Activated CD4-positive, alpha-beta T cell treated with anti-CD3 and anti-CD28 coated beads for 36 hours (primary cell): ENCODE measurements at regions of chr14 and their contacts with region 1.

Region 1: DNA sequence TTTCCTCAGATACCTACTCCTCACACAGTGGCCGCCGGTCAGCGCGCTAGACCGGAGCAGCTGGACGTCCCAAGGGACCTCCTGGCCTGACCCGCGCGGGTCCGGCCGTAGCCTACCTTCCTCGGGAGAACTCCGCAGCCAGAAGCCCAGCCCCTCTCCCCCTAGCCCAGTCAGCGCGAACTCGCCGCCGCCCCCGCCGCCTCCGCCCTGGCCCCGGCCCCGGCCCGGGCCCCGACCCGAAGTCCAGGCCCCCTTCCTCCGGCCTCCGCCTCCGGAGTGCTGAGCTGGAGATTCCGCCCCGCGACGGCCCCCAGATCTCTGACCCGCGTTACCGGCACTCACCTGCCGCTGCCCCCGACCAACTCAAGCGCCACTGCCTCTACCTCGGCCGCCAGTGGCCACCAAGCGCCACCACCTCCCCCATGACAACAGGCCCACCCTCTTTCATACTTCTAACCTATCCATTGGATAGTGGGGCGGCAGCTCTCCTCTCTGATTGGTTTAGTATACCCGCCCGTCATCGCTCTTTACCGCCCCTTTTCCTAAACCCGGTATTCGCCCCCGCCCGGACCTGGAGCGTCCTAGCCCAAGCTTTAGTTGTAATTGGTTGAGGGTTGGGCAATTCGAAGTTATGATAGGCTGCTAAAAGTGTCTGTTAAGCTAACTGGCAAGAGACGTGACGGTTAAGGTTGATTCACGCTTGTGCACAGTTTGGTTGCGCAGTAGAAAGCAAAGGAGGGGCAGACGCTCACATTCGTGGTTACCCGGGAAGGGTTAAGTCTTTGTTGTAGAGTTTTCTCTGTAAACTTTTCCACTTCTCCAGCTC is at the start of gene NUMB:
- DNase-seq: peak; percentile 98
- ATAC-seq: peak; percentile 97
- H3K4me3 Mint-ChIP-seq: peak within 1 kb of the TSS; percentile 95
- H3K27ac Mint-ChIP-seq: peak within 1 kb of the TSS; percentile 96
- H3K4me1 Mint-ChIP-seq: peaks cover 45% of the 10 kb centered on the region
- H3K27me3 Mint-ChIP-seq: no peaks in the 10 kb centered on the region
- total RNA-seq, gene NUMB: 35.7 to 54.9 TPM

Region 2: GRCh38 chr14:72926292-72927028 is 531.9 kb before region 1 on chr14 and contains the start of gene DCAF4:
- CTCF ChIA-PET with region 1: no interaction called
- POLR2A ChIA-PET with region 1: no interaction called
- intact Hi-C with region 1: loop called in 1 of 2 experiments (anchors 2 kb)
- DNase-seq: peak; percentile 96
- ATAC-seq: peak; percentile 99
- H3K4me3 Mint-ChIP-seq: peak within 1 kb of the TSS; percentile 89
- H3K27ac Mint-ChIP-seq: peak within 1 kb of the TSS; percentile 87
- H3K4me1 Mint-ChIP-seq: peaks cover 11% of the 10 kb centered on the region
- H3K27me3 Mint-ChIP-seq: no peaks in the 10 kb centered on the region
- total RNA-seq, gene DCAF4: 16.0 to 21.7 TPM

Region 3: DNA sequence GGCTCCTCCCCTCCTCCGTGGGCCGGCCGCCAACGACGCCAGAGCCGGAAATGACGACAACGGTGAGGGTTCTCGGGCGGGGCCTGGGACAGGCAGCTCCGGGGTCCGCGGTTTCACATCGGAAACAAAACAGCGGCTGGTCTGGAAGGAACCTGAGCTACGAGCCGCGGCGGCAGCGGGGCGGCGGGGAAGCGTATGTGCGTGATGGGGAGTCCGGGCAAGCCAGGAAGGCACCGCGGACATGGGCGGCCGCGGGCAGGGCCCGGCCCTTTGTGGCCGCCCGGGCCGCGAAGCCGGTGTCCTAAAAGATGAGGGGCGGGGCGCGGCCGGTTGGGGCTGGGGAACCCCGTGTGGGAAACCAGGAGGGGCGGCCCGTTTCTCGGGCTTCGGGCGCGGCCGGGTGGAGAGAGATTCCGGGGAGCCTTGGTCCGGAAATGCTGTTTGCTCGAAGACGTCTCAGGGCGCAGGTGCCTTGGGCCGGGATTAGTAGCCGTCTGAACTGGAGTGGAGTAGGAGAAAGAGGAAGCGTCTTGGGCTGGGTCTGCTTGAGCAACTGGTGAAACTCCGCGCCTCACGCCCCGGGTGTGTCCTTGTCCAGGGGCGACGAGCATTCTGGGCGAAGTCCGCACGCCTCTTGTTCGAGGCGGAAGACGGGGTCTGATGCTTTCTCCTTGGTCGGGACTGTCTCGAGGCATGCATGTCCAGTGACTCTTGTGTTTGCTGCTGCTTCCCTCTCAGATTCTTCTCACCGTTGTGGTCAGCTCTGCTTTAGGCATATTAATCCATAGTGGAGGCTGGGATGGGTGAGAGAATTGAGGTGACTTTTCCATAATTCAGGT is 321.8 kb before region 1 on chr14 and contains the start of gene PSEN1:
- CTCF ChIA-PET with region 1: no interaction called
- POLR2A ChIA-PET with region 1: interaction called, 3 read pairs
- intact Hi-C with region 1: loop called (anchors 1 kb)
- DNase-seq: peak; percentile 99
- ATAC-seq: peak; percentile 95
- H3K4me3 Mint-ChIP-seq: peak within 1 kb of the TSS; percentile 86
- H3K27ac Mint-ChIP-seq: peak within 1 kb of the TSS; percentile 82
- H3K4me1 Mint-ChIP-seq: peaks cover 31% of the 10 kb centered on the region
- H3K27me3 Mint-ChIP-seq: no peaks in the 10 kb centered on the region
- total RNA-seq, gene PSEN1: 31.2 to 31.6 TPM

Region 4: DNA sequence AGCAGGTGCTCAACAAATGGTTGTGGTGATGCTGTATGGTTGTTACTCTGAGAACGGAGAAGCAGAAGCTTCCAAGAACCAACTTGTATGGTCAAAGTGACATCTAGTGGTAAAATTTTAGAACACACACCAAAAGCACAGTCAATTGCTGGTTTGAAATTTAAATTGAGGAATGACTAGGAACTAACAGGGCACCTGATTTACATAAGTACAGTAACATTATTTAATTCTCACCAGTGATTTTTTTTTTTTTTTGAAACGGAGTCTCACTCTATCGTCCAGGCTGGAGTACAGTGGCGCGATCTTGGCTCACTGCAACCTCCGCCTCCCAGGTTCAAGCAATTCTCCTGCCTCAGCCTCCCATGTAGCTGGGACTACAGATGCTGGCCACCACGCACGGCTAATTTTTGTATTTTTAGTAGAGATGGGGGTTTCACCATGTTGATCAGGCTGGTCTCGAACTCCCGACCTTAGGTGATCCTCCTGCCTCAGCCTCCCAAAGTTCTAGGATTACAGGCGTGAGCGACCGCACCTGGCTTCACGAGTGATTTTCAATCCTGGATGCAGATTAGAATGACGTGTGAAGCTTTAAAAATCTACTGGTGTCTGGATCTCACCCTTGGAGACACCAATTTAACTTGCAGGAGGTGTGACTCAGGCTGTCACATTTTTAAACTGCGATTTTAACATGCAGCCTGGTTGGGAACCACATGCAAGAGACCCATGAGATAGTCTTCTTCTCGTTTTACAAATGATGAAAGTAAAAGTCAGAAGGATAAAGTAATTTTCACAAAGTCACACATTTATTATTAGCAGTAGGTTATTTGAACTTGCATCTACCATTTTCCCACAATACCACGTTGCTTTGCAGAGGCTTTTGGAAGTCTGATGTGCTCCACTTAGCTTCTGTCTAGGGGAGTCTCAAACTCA is 14.1 kb after region 1 on chr14:
- CTCF ChIA-PET with region 1: interaction called, 24 read pairs
- POLR2A ChIA-PET with region 1: interaction called, 8 read pairs
- intact Hi-C with region 1: loop called (anchors 1 kb)
- DNase-seq: no peak
- ATAC-seq: peak; percentile 32
- H3K4me3 Mint-ChIP-seq: no peak overlapping the region
- H3K27ac Mint-ChIP-seq: no peak overlapping the region
- H3K4me1 Mint-ChIP-seq: peaks cover 15% of the 10 kb centered on the region
- H3K27me3 Mint-ChIP-seq: no peaks in the 10 kb centered on the region

Region 5: GRCh38 chr14:74018586-74019407 is 560.4 kb after region 1 on chr14 and contains the starts of genes BBOF1 and ENTPD5:
- CTCF ChIA-PET with region 1: no interaction called
- POLR2A ChIA-PET with region 1: no interaction called
- intact Hi-C with region 1: loop called in 1 of 2 experiments (anchors 5 kb)
- DNase-seq: peak; percentile 90
- ATAC-seq: peak; percentile 93
- H3K4me3 Mint-ChIP-seq: peak within 1 kb of the TSS; percentile 80
- H3K27ac Mint-ChIP-seq: peak within 1 kb of the TSS; percentile 93
- H3K4me1 Mint-ChIP-seq: peaks cover 12% of the 10 kb centered on the region
- H3K27me3 Mint-ChIP-seq: no peaks in the 10 kb centered on the region
- total RNA-seq, gene BBOF1: 1.9 to 2.1 TPM
- total RNA-seq, gene ENTPD5: 8.7 to 10.0 TPM